Mammary epithelial cell (primary cell): ENCODE measurements at regions of chr17 and their contacts with region 1.

Region 1: DNA sequence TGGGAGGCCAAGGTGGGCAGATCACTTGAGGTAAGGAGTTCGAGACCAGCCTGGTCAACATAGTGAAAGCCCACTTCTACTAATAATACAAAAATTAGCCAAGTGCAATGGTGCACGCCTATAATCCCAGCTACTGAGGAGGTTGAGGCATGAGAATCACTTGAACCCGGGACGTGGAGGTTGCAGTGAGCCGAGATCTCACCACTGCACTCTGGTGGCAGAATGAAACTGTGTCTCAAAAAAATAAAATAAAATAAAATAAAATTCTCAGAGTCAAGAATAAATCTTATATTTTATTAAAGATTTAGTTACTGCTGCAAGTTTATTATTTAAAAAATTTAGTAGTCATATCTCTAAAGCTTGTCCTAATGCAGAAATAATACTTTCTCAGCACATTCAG is 29.7 kb downstream of the ARL4D start:
- DNase-seq: no peak
- H3K4me3 ChIP-seq: no peak overlapping the region
- H3K27ac ChIP-seq: no peak overlapping the region
- H3K4me1 ChIP-seq: peaks cover 5% of the 10 kb centered on the region
- H3K27me3 ChIP-seq: no peaks in the 10 kb centered on the region
- CTCF ChIP-seq: peak in 1 of 2 donors; percentile 18

Region 2: DNA sequence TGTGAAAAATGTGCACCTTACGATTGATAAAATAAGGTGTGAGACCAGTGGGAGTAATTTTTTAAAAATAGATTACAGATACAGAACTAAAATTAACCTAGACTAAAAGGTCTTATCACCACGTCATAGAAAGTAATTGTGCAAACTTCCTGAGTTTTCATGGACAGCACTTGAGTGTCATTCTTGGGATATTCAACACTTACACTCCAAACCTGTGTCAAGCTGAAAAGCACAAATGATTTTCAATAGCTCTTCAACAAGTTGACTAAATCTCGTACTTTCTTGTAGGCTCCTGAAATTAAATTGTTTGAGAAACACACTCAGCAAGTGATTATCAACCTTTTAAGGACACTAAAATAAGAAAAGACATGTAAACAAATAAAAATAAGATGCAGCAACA is 323.9 kb before region 1 on chr17:
- CTCF ChIA-PET with region 1: no interaction called
- dilution Hi-C with region 1: no loop called
- in situ Hi-C with region 1: no loop called
- intact Hi-C with region 1: no loop called
- DNase-seq: no peak
- H3K4me3 ChIP-seq: no peak overlapping the region
- H3K27ac ChIP-seq: no peak overlapping the region
- H3K4me1 ChIP-seq: no peaks in the 10 kb centered on the region
- H3K27me3 ChIP-seq: no peaks in the 10 kb centered on the region
- CTCF ChIP-seq: no peak

Region 3: GRCh38 chr17:43381204-43381603 is 47.3 kb before region 1 on chr17:
- CTCF ChIA-PET with region 1: no interaction called
- dilution Hi-C with region 1: no loop called
- in situ Hi-C with region 1: no loop called
- intact Hi-C with region 1: no loop called
- DNase-seq: no peak
- H3K4me3 ChIP-seq: no peak overlapping the region
- H3K27ac ChIP-seq: no peak overlapping the region
- H3K4me1 ChIP-seq: peaks cover 17% of the 10 kb centered on the region
- H3K27me3 ChIP-seq: no peaks in the 10 kb centered on the region
- CTCF ChIP-seq: no peak

Region 4: GRCh38 chr17:43393944-43394482 is 34.5 kb before region 1 on chr17:
- CTCF ChIA-PET with region 1: interaction called, 3 read pairs
- dilution Hi-C with region 1: no loop called
- in situ Hi-C with region 1: no loop called
- intact Hi-C with region 1: loop called (anchors 1 kb)
- DNase-seq: peak; percentile 68
- H3K4me3 ChIP-seq: no peak overlapping the region
- H3K27ac ChIP-seq: no peak overlapping the region
- H3K4me1 ChIP-seq: peaks cover 11% of the 10 kb centered on the region
- H3K27me3 ChIP-seq: no peaks in the 10 kb centered on the region
- CTCF ChIP-seq: peak; percentile 84 to 89